K562 (cell line): ENCODE measurements at regions of chr12 and their contacts with region 1.

Region 1: DNA sequence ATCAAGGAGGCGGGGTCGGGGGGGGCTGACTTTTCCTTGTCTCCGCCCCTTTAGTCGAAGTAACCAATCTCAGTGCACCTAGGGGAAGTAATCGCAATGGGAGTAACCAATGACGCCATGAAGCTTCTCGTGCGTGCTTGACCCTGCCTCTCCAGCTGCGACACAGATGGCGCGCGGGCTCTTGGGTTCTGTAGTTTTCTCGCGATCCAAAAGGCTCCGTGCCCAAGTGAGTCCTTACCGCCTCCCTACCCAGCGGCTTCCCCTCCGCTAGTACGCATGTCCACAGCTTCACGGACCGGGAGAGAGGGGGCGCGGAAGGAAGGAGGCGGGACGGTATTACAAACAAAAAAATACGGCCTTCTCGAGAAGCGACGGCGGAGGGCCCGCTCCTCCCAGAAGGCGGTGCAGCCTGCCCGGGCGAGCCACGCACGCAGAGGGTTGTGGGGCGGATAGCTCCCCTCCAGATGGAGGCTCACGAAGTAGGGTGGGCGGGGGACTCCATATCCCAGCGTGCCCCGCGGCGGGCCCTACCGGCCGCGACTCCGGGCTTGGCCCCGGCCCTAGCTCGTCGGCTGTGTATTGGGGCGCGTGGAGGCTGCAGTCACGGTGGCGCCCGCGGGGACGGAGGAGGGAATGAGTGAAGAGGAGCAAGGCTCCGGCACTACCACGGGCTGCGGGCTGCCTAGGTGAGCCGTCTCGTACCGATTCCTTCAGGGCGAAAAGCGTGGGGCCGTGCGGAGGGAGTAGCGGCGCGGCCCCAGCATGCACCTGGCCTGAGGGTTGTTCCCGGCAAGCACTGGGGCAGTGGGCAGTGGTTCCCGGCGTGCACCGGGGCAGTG is at the start of gene TARBP2:
- DNase-seq: peak; percentile 85 to 98 (median 88)
- ATAC-seq: peak; percentile 86
- H3K4me3 ChIP-seq: peak within 1 kb of the TSS; percentile 79
- H3K27ac ChIP-seq: peak within 1 kb of the TSS; percentile 97
- H3K4me1 ChIP-seq: peaks cover 33 to 47% of the 10 kb centered on the region in 2 experiments; a peak in 4 of 5 replicates
- H3K27me3 ChIP-seq: no peaks in the 10 kb centered on the region
- CTCF ChIP-seq: no peak
- EP300 ChIP-seq: no peak
- POLR2A ChIP-seq: peak; percentile 96
- RAD21 ChIP-seq: no peak
- polyA plus RNA-seq, gene TARBP2: 5.6 to 16.6 TPM

Region 2: GRCh38 chr12:53513712-53514410 is 12.9 kb after region 1 on chr12:
- CTCF ChIA-PET with region 1: no interaction called
- POLR2A ChIA-PET with region 1: interaction called, 13 read pairs
- in situ Hi-C with region 1: no loop called
- intact Hi-C with region 1: no loop called
- DNase-seq: no peak
- ATAC-seq: no peak
- H3K4me3 ChIP-seq: no peak overlapping the region
- H3K27ac ChIP-seq: no peak overlapping the region
- H3K4me1 ChIP-seq: peaks cover 0 to under 1% of the 10 kb centered on the region in 2 experiments; a peak in 2 of 5 replicates
- H3K27me3 ChIP-seq: no peaks in the 10 kb centered on the region; a peak in 1 of 5 replicates
- CTCF ChIP-seq: no peak
- EP300 ChIP-seq: no peak
- POLR2A ChIP-seq: no peak
- RAD21 ChIP-seq: no peak